ENCODE measurements at regions of chr6 and their contacts with region 1.

Region 1: DNA sequence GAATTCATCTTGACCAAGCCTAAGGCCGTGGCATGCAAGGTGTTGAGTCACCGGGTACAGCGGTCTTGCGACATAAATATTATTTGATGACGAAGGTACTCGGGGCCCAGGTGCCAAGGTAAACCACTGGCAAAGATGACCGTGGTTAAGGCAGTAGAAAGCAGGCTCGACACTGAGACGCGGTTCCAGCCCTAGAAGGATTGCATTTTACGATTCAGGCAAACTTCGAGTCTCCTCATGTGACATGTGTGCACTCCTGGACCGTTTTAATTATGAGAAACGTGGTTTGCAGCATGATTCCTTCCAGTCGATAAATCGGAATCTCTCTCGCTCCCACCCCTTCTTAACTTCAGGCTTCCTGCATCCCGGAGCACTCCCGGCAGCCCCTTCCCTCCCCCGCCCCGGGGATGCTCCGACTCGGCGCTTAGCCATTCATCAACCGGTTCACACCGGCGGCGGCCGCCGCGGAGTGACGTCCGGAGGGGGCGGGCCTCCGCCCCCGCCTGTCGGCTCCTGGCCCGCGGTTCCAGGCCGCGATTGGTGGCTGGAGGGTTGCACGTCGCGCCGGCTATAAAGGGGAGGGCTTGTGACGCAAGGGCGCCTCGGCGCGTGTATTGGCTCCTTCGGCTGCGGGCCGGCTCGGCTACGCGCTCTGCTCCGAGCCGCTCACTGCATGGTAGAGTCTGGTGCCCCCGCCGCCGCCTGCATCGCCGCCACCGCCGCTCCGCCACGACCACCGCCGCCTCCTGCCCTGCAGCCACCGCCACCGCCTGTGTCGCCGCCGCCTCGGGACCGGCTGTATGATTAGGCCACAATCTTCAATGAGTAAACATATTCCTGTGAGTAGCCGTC is at the starts of genes LOC128125822 and PTP4A1:
- DNase-seq: peak; percentile 96
- H3K4me3 Mint-ChIP-seq: peak within 1 kb of the TSS; percentile 95
- H3K27ac Mint-ChIP-seq: peak within 1 kb of the TSS; percentile 95
- H3K4me1 Mint-ChIP-seq: peaks cover 36% of the 10 kb centered on the region
- H3K27me3 Mint-ChIP-seq: no peaks in the 10 kb centered on the region
- total RNA-seq, gene PTP4A1: 80.0 and 84.7 TPM in 2 replicates

Region 2: DNA sequence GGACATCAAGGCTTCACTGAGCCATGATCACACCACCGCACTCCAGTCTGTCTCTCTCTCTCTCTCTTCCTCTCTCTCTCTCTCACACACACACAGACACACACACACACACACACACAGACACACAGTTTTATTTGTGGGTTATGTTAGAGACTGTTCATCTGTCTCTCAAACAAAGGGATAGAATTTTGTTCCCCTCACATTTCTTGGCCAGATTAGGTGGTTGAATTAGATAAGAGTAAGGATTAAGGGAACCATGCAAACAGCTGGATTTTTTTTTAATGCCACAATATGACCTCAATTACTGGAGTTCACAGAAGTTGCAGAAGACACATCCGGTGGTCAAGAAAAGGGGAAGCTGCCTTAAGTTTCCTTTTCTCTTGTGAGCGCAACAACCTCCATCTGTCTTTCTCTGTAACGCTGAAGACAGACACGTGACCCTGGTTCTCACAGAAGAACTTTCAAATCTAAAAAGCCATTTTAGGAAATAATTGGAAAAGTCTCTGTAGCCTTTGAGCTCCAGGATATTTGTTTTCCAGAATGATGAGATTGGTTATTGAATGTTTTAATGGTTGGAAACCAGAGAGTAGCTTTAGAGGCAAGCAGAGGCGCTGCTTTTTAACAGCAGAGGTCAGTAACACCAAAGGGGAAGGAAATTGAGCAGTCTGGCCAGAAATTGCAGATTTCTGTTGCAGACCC is 219.4 kb before region 1 on chr6:
- intact Hi-C with region 1: loop called (anchors 1 kb)
- DNase-seq: no peak
- H3K4me3 Mint-ChIP-seq: peak overlapping the region; percentile 41
- H3K27ac Mint-ChIP-seq: no peak overlapping the region
- H3K4me1 Mint-ChIP-seq: peaks cover 15% of the 10 kb centered on the region
- H3K27me3 Mint-ChIP-seq: peaks cover 6% of the 10 kb centered on the region

Region 3: GRCh38 chr6:63527658-63528514 is 44.2 kb before region 1 on chr6:
- intact Hi-C with region 1: loop called (anchors 2 kb)
- DNase-seq: no peak
- H3K4me3 Mint-ChIP-seq: no peak overlapping the region
- H3K27ac Mint-ChIP-seq: peak overlapping the region; percentile 29
- H3K4me1 Mint-ChIP-seq: peaks cover 41% of the 10 kb centered on the region
- H3K27me3 Mint-ChIP-seq: peaks cover 2% of the 10 kb centered on the region

Region 4: GRCh38 chr6:63598049-63599036 is 26.2 kb after region 1 on chr6:
- intact Hi-C with region 1: loop called (anchors 1 kb)
- DNase-seq: peak; percentile 63
- H3K4me3 Mint-ChIP-seq: peak overlapping the region; percentile 86
- H3K27ac Mint-ChIP-seq: no peak overlapping the region
- H3K4me1 Mint-ChIP-seq: peaks cover 16% of the 10 kb centered on the region
- H3K27me3 Mint-ChIP-seq: peaks cover 10% of the 10 kb centered on the region

Region 5: GRCh38 chr6:63764318-63764916 is 192.3 kb after region 1 on chr6:
- intact Hi-C with region 1: loop called (anchors 1 kb)
- DNase-seq: no peak
- H3K4me3 Mint-ChIP-seq: no peak overlapping the region
- H3K27ac Mint-ChIP-seq: no peak overlapping the region
- H3K4me1 Mint-ChIP-seq: no peaks in the 10 kb centered on the region
- H3K27me3 Mint-ChIP-seq: peaks cover 14% of the 10 kb centered on the region

Region 6: DNA sequence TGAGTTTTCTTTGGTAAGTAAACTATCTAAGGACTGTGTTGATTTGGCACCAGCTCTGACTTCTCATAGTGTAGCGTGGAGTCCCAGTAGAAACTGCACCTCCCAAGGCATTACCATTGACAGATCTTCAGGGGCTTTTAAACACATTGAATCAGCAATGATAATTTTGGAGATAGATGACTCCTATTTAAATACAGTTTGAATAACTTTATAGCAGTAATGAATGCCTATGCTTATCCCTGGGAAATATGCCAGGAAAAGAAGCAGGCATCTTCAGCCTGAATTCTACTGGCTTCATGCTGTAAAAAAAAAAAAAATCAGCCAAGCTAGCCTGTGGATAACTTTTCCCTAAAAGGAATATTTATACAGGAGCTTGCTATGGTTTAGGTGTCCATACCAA is 1239.0 kb after region 1 on chr6:
- intact Hi-C with region 1: no loop called
- DNase-seq: no peak
- H3K4me3 Mint-ChIP-seq: no peak overlapping the region
- H3K27ac Mint-ChIP-seq: no peak overlapping the region
- H3K4me1 Mint-ChIP-seq: no peaks in the 10 kb centered on the region
- H3K27me3 Mint-ChIP-seq: no peaks in the 10 kb centered on the region